Mammary epithelial cell (primary cell): ENCODE measurements at regions of chr2 and their contacts with region 1.

Region 1: DNA sequence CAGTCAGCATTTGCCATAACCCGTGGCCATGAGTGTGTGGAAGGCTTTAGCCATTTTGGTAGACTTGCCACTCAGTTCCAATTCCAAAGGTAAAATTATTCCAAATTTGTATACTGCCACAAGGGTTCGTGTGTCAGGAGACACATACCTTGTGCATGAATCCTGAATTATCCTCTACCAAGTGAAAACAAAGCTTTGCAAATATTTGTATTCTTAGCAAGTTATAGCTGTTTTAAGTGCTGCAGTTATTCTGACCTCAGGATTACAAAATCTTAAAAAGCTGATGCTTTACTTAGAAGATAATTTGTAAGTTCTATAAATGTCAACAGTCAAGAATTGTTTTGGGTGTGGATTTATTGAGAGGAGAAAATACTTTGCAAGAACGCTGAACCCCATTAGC is 100.6 kb downstream of the ANTXR1 start:
- DNase-seq: no peak
- H3K4me3 ChIP-seq: no peak overlapping the region
- H3K27ac ChIP-seq: no peak overlapping the region
- H3K4me1 ChIP-seq: no peaks in the 10 kb centered on the region
- H3K27me3 ChIP-seq: no peaks in the 10 kb centered on the region
- CTCF ChIP-seq: no peak

Region 2: DNA sequence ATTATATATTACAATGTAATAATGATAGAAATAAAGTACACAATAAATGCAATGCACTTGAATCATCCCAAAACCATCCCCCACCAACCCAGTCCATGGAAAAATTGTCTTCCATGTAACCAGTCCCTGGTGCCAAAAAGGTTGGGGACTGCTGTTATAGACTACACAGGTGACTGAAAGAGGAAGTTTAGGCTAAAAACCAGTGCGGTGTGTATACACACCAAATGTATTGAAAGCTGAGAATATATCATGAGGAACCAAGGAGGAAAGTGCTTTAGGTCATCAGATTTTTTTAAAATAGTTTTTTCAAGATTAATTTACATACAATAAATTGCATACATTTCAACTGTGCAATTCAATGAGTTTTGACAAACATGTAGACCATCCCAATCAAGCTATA is 1030.3 kb before region 1 on chr2:
- CTCF ChIA-PET with region 1: no interaction called
- dilution Hi-C with region 1: no loop called
- in situ Hi-C with region 1: no loop called
- intact Hi-C with region 1: no loop called
- DNase-seq: no peak
- H3K4me3 ChIP-seq: no peak overlapping the region
- H3K27ac ChIP-seq: no peak overlapping the region
- H3K4me1 ChIP-seq: no peaks in the 10 kb centered on the region
- H3K27me3 ChIP-seq: peaks cover 4% of the 10 kb centered on the region
- CTCF ChIP-seq: no peak

Region 3: GRCh38 chr2:69285379-69285894 is 171.8 kb after region 1 on chr2:
- CTCF ChIA-PET with region 1: no interaction called
- dilution Hi-C with region 1: no loop called
- in situ Hi-C with region 1: no loop called
- intact Hi-C with region 1: loop called (anchors 5 kb)
- DNase-seq: no peak
- H3K4me3 ChIP-seq: no peak overlapping the region
- H3K27ac ChIP-seq: no peak overlapping the region
- H3K4me1 ChIP-seq: no peaks in the 10 kb centered on the region
- H3K27me3 ChIP-seq: no peaks in the 10 kb centered on the region
- CTCF ChIP-seq: no peak

Region 4: DNA sequence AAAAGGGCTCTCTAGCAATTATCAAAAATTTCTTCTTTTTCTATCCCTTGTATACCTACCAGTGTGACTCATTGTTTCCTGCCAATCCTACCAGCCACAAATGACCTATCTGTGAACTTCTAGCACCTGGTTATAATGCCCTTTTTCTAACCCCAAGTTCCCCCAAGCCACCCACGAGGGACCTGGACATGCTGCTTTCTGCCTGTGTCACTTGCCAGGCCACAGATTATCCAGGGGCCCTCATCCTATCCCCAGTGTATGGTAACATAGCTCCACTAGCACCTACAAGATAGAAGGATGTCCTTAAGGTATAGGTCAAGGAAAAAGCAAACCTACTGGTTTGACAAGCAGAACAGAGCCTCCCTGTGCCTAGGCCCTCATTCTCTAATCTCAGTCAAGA is 503.1 kb after region 1 on chr2:
- CTCF ChIA-PET with region 1: no interaction called
- dilution Hi-C with region 1: no loop called
- in situ Hi-C with region 1: no loop called
- intact Hi-C with region 1: no loop called
- DNase-seq: peak; percentile 58
- H3K4me3 ChIP-seq: no peak overlapping the region
- H3K27ac ChIP-seq: no peak overlapping the region
- H3K4me1 ChIP-seq: peaks cover 26% of the 10 kb centered on the region
- H3K27me3 ChIP-seq: no peaks in the 10 kb centered on the region
- CTCF ChIP-seq: no peak